ENCODE measurements at regions of chr22 and their contacts with region 1.

Region 1: GRCh38 chr22:29040385-29041275 is 21.0 kb downstream of the C22orf31 start:
- DNase-seq: peak; percentile 46
- ATAC-seq: peak; percentile 83

Region 2: DNA sequence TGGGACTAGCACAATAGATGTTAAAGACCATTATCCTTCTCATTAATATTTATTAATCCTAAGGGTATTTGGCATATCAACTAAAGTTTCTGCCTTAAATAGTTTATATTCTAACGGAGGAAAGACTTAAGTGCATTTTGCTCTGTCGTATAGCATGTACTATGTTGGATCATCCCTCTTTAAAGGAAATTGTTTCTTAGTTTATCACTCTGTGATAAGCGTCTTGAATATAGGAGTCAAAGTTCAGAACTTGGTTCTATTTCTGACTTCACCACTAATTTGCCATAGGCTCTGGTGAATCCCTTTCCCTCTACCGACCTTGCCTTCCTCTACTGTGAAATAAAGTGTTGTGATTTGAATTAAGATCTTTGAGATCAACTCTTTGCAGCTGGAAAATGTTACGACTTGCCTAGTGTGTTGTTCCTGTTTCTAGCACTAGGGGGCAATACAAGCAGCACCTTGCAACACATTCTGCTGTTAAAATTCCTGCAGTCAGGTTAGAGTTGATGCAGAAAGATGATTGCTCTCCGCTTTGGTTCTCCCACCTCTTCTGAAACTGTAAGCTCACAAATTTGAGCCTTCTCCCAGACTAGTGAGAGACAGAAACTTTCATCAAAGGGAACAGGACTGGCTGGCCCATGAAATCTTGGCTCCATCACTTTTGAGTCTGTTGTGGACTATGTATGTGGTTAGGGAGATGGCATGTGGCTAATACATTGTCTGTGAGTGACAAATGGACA is 185.1 kb before region 1 on chr22:
- intact Hi-C with region 1: loop called (anchors 5 kb)
- DNase-seq: no peak
- ATAC-seq: peak; percentile 68